Activated naive CD4-positive, alpha-beta T cell treated with anti-CD3 and anti-CD28 coated beads for 36 hours (primary cell): ENCODE measurements at regions of chr18 and their contacts with region 1.

Region 1: DNA sequence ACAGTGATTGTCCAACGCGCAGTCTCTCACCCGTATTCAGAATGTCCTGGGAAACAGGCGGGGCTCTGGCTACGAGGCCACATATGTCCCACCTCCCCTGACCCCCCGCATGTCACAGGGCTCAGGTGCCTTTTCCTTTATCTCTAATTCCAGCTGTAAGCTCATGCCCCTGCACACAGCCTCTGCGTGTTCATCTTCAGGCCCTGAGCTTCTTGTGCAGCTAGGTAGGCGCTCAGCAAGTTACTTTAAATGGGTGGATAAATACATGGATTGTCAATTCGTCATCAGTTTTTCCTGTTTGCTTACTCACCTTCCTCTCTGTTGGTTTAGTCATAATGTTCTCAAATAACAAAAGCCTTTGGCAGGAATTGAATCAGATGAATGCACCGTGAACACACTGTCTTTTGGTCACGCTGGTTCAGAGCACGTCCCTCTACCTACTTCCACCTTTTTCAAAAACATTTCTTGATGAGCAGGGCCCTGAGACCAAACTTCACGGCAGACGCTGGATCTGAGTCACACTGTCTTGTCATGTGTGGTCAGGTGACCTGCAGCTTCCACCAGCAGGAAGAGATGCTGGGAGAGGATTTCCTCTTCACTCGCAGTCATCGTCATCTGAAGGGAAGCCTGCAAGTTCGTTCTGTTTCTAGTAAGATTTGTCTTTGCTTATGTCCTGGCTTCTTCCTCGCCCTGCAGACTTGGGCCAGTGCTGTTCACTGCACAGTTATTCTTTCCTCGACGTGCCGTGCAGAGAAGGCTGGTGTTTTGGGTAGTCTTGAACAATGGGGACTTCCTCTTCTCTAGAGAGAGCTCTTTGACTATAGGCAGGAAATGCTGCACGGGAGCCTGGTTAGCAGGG is 138.1 kb downstream of the PTGR3 start:
- DNase-seq: peak; percentile 88
- H3K4me3 Mint-ChIP-seq: peak overlapping the region; percentile 73
- H3K27ac Mint-ChIP-seq: peak overlapping the region; percentile 95
- H3K4me1 Mint-ChIP-seq: peaks cover 31% of the 10 kb centered on the region
- H3K27me3 Mint-ChIP-seq: no peaks in the 10 kb centered on the region

Region 2: DNA sequence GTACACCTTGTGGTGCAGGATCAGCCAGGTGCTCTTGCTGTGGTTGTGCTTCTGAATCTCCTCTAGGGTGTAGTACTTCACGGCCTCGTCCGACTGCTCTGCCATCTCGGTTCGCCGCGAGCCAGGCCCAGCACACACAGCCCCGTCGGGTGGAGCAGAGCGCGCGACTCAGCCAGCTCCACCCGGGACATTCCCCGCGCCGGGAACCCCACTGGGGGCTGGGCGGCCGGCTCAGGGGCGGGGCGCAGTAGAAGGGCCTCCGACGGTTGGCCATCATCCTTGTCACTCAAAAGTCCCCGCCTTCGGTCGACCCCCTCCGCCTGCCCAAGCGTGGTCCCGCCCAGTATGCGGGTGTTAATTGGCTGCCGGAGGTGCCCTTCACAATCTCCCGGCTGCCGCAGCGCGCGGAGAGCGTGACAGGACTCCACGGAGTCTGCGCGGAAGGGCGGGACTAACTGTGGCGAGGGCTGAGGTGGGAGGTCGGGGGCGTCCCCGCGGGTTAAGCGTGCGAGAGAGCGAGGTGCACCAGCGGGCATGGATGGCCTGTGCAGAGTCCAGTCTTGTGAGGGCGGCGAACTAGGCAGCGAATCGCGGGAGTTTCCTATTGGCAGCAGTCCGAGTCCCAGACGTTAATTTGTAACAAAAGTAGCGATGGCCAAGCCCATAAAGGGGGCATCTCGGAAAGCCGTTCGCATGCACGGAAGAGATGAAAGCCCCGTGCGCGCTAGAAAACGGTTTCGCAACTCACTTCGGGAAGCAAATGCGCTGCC is 778.9 kb before region 1 on chr18 and contains the start of gene CYB5A:
- CTCF ChIA-PET with region 1: no interaction called
- intact Hi-C with region 1: loop called (anchors 5 kb)
- DNase-seq: peak; percentile 99
- H3K4me3 Mint-ChIP-seq: no peak within 1 kb of the TSS
- H3K27ac Mint-ChIP-seq: peak within 1 kb of the TSS; percentile 59
- H3K4me1 Mint-ChIP-seq: peaks cover 20% of the 10 kb centered on the region
- H3K27me3 Mint-ChIP-seq: no peaks in the 10 kb centered on the region
- total RNA-seq, gene CYB5A: 77.8 to 78.3 TPM

Region 3: DNA sequence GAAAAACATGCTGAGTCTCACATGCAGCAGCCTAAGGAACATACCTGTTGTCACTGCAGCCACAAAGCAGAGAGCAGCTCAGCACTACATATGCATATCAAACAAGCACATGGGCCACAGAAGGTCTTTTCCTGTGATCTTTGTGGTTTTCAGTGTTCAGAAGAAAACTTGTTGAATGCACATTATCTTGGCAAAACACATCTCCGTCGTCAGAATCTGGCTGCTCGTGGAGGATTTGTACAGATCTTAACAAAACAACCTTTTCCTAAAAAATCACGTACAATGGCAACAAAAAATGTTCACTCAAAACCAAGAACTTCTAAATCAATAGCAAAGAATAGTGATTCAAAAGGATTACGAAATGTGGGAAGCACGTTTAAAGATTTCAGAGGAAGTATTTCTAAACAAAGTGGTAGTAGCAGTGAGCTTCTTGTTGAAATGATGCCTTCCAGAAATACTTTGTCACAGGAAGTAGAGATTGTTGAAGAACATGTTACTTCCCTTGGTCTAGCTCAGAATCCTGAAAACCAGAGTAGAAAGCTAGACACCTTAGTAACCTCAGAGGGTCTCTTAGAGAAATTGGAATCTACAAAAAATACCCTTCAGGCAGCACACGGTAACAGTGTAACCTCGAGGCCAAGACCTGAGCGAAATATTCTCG is 439.1 kb before region 1 on chr18:
- CTCF ChIA-PET with region 1: no interaction called
- intact Hi-C with region 1: loop called (anchors 2 kb)
- DNase-seq: peak; percentile 31
- H3K4me3 Mint-ChIP-seq: peak overlapping the region; percentile 64
- H3K27ac Mint-ChIP-seq: peak overlapping the region; percentile 89
- H3K4me1 Mint-ChIP-seq: peaks cover 46% of the 10 kb centered on the region
- H3K27me3 Mint-ChIP-seq: no peaks in the 10 kb centered on the region

Region 4: GRCh38 chr18:74861154-74861553 is 209.7 kb before region 1 on chr18:
- CTCF ChIA-PET with region 1: no interaction called
- intact Hi-C with region 1: no loop called
- DNase-seq: no peak
- H3K4me3 Mint-ChIP-seq: no peak overlapping the region
- H3K27ac Mint-ChIP-seq: no peak overlapping the region
- H3K4me1 Mint-ChIP-seq: no peaks in the 10 kb centered on the region
- H3K27me3 Mint-ChIP-seq: no peaks in the 10 kb centered on the region

Region 5: DNA sequence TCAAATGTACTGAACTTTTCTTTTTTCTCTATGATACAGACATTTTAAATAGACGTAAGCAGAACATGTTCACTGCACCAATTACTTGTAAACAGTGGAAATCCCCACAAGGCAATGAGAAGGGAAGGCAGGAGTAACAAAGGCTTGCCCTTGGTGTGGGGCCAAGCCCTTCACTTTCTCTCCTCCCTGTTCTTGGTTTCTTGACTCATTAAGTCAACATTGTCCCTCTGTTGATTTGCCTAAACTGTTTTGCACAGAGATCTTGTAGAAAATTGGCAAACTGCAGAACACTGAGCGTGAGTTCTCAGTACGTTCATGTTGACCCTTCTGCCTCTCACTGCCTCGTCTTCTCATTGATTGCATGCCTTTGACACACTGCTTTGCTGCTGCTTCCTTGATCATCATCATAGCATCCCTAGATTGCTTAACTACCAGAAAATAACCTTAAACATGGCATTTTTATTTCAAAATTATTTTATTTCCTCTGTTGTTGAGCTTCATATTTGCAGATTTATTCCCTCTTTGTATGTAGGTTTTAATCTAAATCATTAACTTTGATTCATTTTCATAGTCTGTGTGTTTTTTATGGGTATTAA is 119.6 kb before region 1 on chr18:
- CTCF ChIA-PET with region 1: no interaction called
- intact Hi-C with region 1: loop called (anchors 2 kb)
- DNase-seq: peak; percentile 47
- H3K4me3 Mint-ChIP-seq: no peak overlapping the region
- H3K27ac Mint-ChIP-seq: peak overlapping the region; percentile 18
- H3K4me1 Mint-ChIP-seq: peaks cover 22% of the 10 kb centered on the region
- H3K27me3 Mint-ChIP-seq: no peaks in the 10 kb centered on the region

Region 6: GRCh38 chr18:75029481-75029880 is 41.4 kb before region 1 on chr18:
- CTCF ChIA-PET with region 1: no interaction called
- intact Hi-C with region 1: loop called (anchors 2 kb)
- DNase-seq: peak; percentile 45
- H3K4me3 Mint-ChIP-seq: no peak overlapping the region
- H3K27ac Mint-ChIP-seq: peak overlapping the region; percentile 6
- H3K4me1 Mint-ChIP-seq: peaks cover 22% of the 10 kb centered on the region
- H3K27me3 Mint-ChIP-seq: no peaks in the 10 kb centered on the region

Region 7: GRCh38 chr18:75111722-75112121 is 40.9 kb after region 1 on chr18:
- CTCF ChIA-PET with region 1: no interaction called
- intact Hi-C with region 1: no loop called
- DNase-seq: no peak
- H3K4me3 Mint-ChIP-seq: no peak overlapping the region
- H3K27ac Mint-ChIP-seq: no peak overlapping the region
- H3K4me1 Mint-ChIP-seq: peaks cover 3% of the 10 kb centered on the region
- H3K27me3 Mint-ChIP-seq: no peaks in the 10 kb centered on the region

Region 8: DNA sequence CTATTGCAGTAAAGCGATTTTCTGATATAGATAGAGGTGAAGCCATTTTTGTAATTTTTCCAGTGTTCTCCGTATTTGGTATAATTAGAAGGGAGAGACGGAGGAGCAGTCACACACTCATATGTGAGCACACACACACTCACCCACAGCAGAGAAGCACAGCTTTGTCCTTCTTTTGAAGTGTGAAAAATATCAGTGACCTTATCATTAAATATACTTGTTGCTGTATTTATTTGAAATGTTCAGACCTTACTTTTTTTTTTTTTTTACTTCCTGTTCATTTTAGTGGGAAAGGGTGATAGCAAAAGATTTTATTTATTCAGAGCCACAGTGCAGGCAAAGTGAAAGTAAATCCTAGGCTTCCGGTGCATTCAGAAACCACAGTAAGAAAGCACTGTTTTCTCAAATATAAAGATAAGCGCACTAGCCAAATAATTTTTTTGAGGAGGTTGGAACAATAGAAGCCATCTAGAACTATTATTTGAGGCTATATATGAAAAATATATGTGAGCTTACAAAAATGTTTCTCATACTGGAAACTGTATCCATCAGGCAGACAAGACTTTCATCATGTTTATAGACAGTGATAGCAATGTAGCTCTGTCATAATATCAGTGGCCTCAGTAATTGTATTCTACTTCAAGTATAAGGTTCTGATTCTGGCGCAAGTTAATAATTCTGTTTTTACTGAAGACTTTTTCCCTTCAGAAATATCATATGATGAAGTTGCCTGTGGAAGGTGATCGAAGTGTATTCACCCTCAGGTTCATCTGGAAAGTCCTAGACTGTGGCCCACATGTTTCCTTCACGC is 177.0 kb after region 1 on chr18:
- CTCF ChIA-PET with region 1: no interaction called
- intact Hi-C with region 1: loop called (anchors 1 kb)
- DNase-seq: peak; percentile 36
- H3K4me3 Mint-ChIP-seq: peak overlapping the region; percentile 77
- H3K27ac Mint-ChIP-seq: peak overlapping the region; percentile 93
- H3K4me1 Mint-ChIP-seq: peaks cover 60% of the 10 kb centered on the region
- H3K27me3 Mint-ChIP-seq: no peaks in the 10 kb centered on the region

Region 9: DNA sequence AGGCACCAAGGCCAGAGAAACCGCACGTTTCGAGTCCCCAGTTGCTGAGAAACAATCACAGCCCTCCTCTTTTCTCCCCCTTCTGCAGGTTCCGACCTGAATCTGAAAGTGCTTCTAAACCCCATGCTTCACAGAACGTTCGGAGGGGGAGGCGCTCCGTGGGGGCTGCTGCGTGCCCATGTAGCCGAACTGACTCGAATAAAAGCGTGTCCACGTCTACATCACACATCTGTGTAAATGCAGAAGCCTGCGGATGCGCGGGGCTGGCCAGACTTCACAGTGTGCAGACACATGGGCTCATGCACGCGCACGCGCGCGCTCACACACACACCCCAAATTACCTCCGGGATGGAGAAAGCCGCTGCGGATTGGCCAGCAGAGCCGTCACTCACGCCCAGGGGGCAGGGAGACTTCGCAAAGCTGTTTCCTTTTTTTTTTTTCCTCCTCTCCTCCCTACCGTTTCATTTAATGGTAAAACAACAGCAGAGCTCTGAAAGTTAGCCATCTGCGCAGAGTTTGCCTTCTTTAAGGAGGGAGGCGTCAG is 1421.9 kb after region 1 on chr18:
- CTCF ChIA-PET with region 1: no interaction called
- intact Hi-C with region 1: loop called (anchors 5 kb)
- DNase-seq: peak; percentile 100
- H3K4me3 Mint-ChIP-seq: peak overlapping the region; percentile 93
- H3K27ac Mint-ChIP-seq: peak overlapping the region; percentile 74
- H3K4me1 Mint-ChIP-seq: peaks cover 23% of the 10 kb centered on the region
- H3K27me3 Mint-ChIP-seq: peaks cover 14% of the 10 kb centered on the region